SK-N-SH (cell line): ENCODE measurements at regions of chr2 and their contacts with region 1.

Region 1: GRCh38 chr2:6993229-6993640 is 76.0 kb downstream of the RNF144A start:
- DNase-seq: peak; percentile 83
- H3K4me3 ChIP-seq: peak overlapping the region in 1 of 2 experiments; percentile 4; a peak in 1 of 4 replicates
- H3K27ac ChIP-seq: peak overlapping the region in 1 of 2 experiments; percentile 100; a peak in 3 of 4 replicates
- H3K4me1 ChIP-seq: peaks cover 0 to 46% of the 10 kb centered on the region in 2 experiments; a peak in 2 of 4 replicates
- H3K27me3 ChIP-seq: no peaks in the 10 kb centered on the region
- CTCF ChIP-seq: no peak
- EP300 ChIP-seq: no peak; a peak in 1 of 4 replicates
- RAD21 ChIP-seq: no peak; the same call in 1 of the 2 replicates

Region 2: DNA sequence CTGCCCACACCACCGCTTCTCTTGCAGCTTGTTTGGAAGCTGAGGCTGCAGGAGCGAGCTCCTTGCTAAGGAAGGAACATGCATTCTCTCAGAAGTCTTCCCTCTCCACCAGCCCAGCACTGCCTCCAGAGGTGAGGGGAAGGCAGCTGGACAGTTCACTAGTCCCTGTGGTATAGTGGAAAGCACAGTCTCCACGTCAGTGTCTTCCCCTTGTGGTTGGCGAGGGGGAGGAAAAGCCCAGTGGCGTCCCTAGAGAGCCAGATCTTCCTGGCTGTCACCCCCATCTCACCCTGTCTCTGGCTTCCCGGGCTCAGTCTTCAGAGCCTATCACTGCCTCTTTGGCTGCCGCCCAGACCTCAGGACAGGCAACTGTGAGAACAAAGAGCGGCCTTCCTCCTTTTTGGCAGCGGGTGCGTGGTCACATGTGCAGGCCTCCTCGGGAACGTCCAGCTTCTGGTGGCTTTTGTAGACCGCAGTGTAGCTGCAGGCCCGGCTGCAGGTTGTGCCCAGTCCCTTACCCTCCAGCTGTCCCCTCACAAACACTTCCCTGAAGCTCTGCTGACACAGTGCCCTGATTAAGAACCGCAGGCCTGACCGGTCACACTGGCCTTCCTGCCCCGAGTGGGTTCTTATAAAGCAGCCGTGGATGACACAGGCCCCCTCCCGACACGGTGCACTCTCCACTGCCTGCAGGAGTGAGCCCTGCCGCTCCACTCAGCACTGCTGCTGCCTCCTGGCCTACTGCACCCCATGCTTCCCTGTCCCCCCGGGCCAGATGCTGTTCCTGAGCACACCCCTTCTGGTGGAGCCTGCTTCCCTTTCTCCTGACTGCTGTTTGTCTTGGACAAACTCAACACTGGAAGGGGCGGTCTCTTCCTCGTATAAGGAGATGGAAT is 14.9 kb after region 1 on chr2:
- CTCF ChIA-PET with region 1: interaction called, 128 read pairs
- POLR2A ChIA-PET with region 1: interaction called, 13 read pairs
- DNase-seq: peak; percentile 84
- H3K4me3 ChIP-seq: no peak overlapping the region
- H3K27ac ChIP-seq: peak overlapping the region; percentile 99
- H3K4me1 ChIP-seq: peaks cover 34 to 78% of the 10 kb centered on the region in 2 experiments
- H3K27me3 ChIP-seq: no peaks in the 10 kb centered on the region
- CTCF ChIP-seq: peak; percentile 63
- EP300 ChIP-seq: peak; percentile 61 to 95
- RAD21 ChIP-seq: peak; percentile 67

Region 3: GRCh38 chr2:7593360-7593759 is 600.1 kb after region 1 on chr2:
- CTCF ChIA-PET with region 1: no interaction called
- POLR2A ChIA-PET with region 1: no interaction called
- DNase-seq: no peak
- H3K4me3 ChIP-seq: no peak overlapping the region
- H3K27ac ChIP-seq: no peak overlapping the region
- H3K4me1 ChIP-seq: no peaks in the 10 kb centered on the region
- H3K27me3 ChIP-seq: no peaks in the 10 kb centered on the region
- CTCF ChIP-seq: no peak
- EP300 ChIP-seq: no peak
- RAD21 ChIP-seq: no peak